Naive thymus-derived CD4-positive, alpha-beta T cell (primary cell): ENCODE measurements at regions of chr3 and their contacts with region 1.

Region 1: GRCh38 chr3:119676771-119677640 is at the start of gene COX17:
- DNase-seq: peak; percentile 87 to 98 (median 96)
- ATAC-seq: peak; percentile 91
- H3K4me3 ChIP-seq: peak within 1 kb of the TSS; percentile 62
- H3K4me3 Mint-ChIP-seq: peak within 1 kb of the TSS; percentile 78 to 98 (median 90)
- H3K27ac ChIP-seq: peak within 1 kb of the TSS; percentile 72
- H3K27ac Mint-ChIP-seq: peak within 1 kb of the TSS; percentile 94 to 99 (median 96)
- H3K4me1 ChIP-seq: peaks cover 14 to 16% of the 10 kb centered on the region in 2 donors
- H3K4me1 Mint-ChIP-seq: peaks cover 19 to 46% (median 41%) of the 10 kb centered on the region in 7 donors
- H3K27me3 ChIP-seq: no peaks in the 10 kb centered on the region
- H3K27me3 Mint-ChIP-seq: peaks cover 0 to 3% (median 0%) of the 10 kb centered on the region in 5 donors
- total RNA-seq, gene COX17: 25.6 to 55.0 (median 34.8) TPM

Region 2: DNA sequence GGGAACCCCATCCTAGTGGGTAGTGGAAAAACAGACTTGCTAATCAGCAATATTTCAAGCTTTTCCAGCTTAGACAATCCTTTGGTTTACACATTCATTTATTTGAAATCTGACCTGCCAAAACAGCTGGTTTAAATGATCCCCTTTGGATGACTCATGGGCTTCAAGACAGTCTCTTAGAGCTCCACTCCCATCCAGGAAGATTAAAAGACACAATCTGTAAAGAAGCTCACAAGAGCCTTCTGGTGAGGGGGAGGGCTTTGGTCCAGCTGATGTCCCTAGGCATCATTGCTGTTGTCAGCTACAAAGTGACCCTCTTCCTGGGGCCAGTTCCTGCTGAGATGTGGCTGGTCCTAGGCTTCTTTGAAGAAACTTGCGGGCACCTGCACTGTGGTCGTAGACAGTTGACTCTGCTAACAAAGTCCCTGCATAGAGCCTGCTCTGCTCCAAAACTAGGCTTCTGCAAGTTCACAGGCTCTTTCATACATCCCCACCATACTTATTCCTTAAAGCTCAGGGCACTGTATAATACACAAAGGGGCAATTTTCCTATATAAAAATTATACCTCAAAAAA is 716.0 kb before region 1 on chr3:
- CTCF ChIA-PET with region 1: no interaction called
- POLR2A ChIA-PET with region 1: no interaction called
- intact Hi-C with region 1: loop called in 1 of 2 experiments (anchors 10 kb)
- DNase-seq: no peak
- ATAC-seq: no peak
- H3K4me3 ChIP-seq: no peak overlapping the region
- H3K4me3 Mint-ChIP-seq: no peak overlapping the region
- H3K27ac ChIP-seq: no peak overlapping the region
- H3K27ac Mint-ChIP-seq: no peak overlapping the region
- H3K4me1 ChIP-seq: peaks cover 9 to 19% of the 10 kb centered on the region in 2 donors
- H3K4me1 Mint-ChIP-seq: peaks cover 13 to 34% (median 29%) of the 10 kb centered on the region in 7 donors
- H3K27me3 ChIP-seq: no peaks in the 10 kb centered on the region
- H3K27me3 Mint-ChIP-seq: peaks cover 0 to 25% (median 4%) of the 10 kb centered on the region in 5 donors

Region 3: GRCh38 chr3:119219069-119219468 is 457.9 kb before region 1 on chr3:
- CTCF ChIA-PET with region 1: no interaction called
- POLR2A ChIA-PET with region 1: interaction called, 3 read pairs
- intact Hi-C with region 1: loop called in 1 of 2 experiments (anchors 1 kb)
- DNase-seq: peak in 7 of 9 donors; percentile 65 to 87 (median 76)
- ATAC-seq: peak; percentile 96
- H3K4me3 ChIP-seq: peak overlapping the region; percentile 34
- H3K4me3 Mint-ChIP-seq: peak overlapping the region; percentile 54 to 87 (median 70)
- H3K27ac ChIP-seq: peak overlapping the region; percentile 68
- H3K27ac Mint-ChIP-seq: peak overlapping the region; percentile 90 to 99 (median 94)
- H3K4me1 ChIP-seq: peaks cover 9 to 25% of the 10 kb centered on the region in 2 donors
- H3K4me1 Mint-ChIP-seq: peaks cover 22 to 84% (median 71%) of the 10 kb centered on the region in 7 donors
- H3K27me3 ChIP-seq: no peaks in the 10 kb centered on the region
- H3K27me3 Mint-ChIP-seq: no peaks in the 10 kb centered on the region

Region 4: DNA sequence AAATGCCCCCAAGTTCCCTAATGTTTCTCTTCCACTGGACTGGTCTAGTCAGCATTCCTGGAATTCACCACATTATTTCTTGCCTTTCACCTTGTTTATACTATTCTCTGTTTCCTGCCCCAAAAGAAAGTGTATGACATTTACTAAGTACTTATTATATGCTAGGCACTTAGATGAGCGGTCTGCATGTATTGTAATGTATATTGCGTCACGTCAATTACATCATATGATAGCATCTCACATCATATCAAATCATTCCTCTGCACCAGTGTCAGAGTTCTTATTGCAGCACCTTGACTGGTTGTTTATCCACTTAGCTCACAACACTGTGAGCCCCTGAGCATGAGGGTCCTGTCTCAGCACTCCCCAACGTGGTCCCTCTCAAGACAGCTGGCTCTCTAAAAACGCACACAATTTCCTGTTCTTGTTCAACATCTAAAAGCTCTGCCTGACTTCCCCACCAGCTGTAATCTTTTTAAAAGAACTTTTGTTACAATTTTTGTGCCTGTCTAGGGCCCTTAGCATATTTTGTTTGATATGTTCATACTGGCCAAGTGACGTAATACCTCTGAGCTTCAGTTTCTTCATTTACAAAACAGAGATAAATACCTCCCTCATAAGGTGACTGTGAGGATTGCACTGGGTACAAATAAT is 324.0 kb before region 1 on chr3:
- CTCF ChIA-PET with region 1: no interaction called
- POLR2A ChIA-PET with region 1: no interaction called
- intact Hi-C with region 1: loop called in 1 of 2 experiments (anchors 1 kb)
- DNase-seq: peak in 7 of 9 donors; percentile 53 to 78 (median 69)
- ATAC-seq: peak; percentile 77
- H3K4me3 ChIP-seq: no peak overlapping the region
- H3K4me3 Mint-ChIP-seq: peak overlapping the region in 8 of 10 donors; percentile 2 to 67 (median 54)
- H3K27ac ChIP-seq: no peak overlapping the region
- H3K27ac Mint-ChIP-seq: peak overlapping the region in 8 of 9 donors; percentile 13 to 81 (median 42)
- H3K4me1 ChIP-seq: peaks cover 0 to 35% of the 10 kb centered on the region in 2 donors
- H3K4me1 Mint-ChIP-seq: peaks cover 26 to 47% (median 36%) of the 10 kb centered on the region in 7 donors
- H3K27me3 ChIP-seq: no peaks in the 10 kb centered on the region
- H3K27me3 Mint-ChIP-seq: peaks cover 0 to 20% (median 0%) of the 10 kb centered on the region in 5 donors

Region 5: GRCh38 chr3:119559441-119559963 is 117.5 kb before region 1 on chr3 and contains the start of gene CD80:
- CTCF ChIA-PET with region 1: no interaction called
- POLR2A ChIA-PET with region 1: no interaction called
- intact Hi-C with region 1: loop called in 1 of 2 experiments (anchors 1 kb)
- DNase-seq: peak in 7 of 9 donors; percentile 14 to 63 (median 33)
- ATAC-seq: peak; percentile 76
- H3K4me3 ChIP-seq: no peak within 1 kb of the TSS
- H3K4me3 Mint-ChIP-seq: peak within 1 kb of the TSS in 2 of 10 donors; percentile 12 to 81
- H3K27ac ChIP-seq: no peak within 1 kb of the TSS
- H3K27ac Mint-ChIP-seq: peak within 1 kb of the TSS in 2 of 9 donors; percentile 68 to 71
- H3K4me1 ChIP-seq: peaks cover 0 to 6% of the 10 kb centered on the region in 2 donors
- H3K4me1 Mint-ChIP-seq: peaks cover 0 to 64% (median 8%) of the 10 kb centered on the region in 7 donors
- H3K27me3 ChIP-seq: no peaks in the 10 kb centered on the region
- H3K27me3 Mint-ChIP-seq: peaks cover 0 to 5% (median 0%) of the 10 kb centered on the region in 5 donors
- total RNA-seq, gene CD80: 0.13 to 15.1 (median 1.2) TPM in 3 of 5 experiments, not detected in the others

Region 6: DNA sequence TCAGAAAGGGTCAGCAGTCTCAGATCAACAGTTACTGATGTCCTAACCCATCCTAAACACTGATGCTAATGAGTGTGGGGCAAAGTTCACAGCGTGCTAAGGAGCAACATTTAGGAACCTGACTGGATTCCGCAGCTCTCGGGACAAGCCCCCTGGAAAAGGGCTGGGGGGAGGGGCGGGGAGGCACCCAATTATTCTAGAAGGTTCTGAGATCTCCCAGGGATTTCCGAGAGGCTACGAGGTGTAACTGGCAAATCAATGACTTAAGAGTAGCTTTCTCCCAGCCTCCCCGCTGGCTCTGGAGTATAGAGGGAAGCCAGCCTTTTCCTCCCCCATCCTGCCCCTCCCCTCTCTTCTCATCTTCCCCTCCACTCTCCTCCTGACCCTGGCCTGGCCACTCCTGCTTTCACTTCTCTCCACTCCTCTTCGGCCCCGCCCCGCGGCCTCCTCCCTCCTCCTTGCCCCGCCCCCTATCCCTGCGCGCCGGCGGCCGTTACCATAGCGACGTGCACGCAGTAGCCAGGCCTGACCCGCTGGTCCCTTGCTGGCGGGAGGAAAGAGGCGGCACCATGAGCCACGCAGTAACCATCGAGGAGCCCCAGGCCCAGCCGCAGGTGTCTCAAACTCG is 25.6 kb after region 1 on chr3 and contains the start of gene CFAP91:
- CTCF ChIA-PET with region 1: no interaction called
- POLR2A ChIA-PET with region 1: interaction called, 3 read pairs
- intact Hi-C with region 1: loop called (anchors 1 kb)
- DNase-seq: peak; percentile 56 to 81 (median 63)
- ATAC-seq: peak; percentile 97
- H3K4me3 ChIP-seq: peak within 1 kb of the TSS; percentile 61
- H3K4me3 Mint-ChIP-seq: peak within 1 kb of the TSS; percentile 67 to 87 (median 82)
- H3K27ac ChIP-seq: peak within 1 kb of the TSS; percentile 16
- H3K27ac Mint-ChIP-seq: peak within 1 kb of the TSS in 6 of 9 donors; percentile 15 to 47 (median 43)
- H3K4me1 ChIP-seq: peaks cover 0 to 13% of the 10 kb centered on the region in 2 donors
- H3K4me1 Mint-ChIP-seq: peaks cover 16 to 36% (median 30%) of the 10 kb centered on the region in 7 donors
- H3K27me3 ChIP-seq: no peaks in the 10 kb centered on the region
- H3K27me3 Mint-ChIP-seq: peaks cover 0 to 33% (median 3%) of the 10 kb centered on the region in 5 donors
- total RNA-seq, gene CFAP91: 0.13 to 0.32 TPM in 2 of 5 experiments, not detected in the others

Region 7: DNA sequence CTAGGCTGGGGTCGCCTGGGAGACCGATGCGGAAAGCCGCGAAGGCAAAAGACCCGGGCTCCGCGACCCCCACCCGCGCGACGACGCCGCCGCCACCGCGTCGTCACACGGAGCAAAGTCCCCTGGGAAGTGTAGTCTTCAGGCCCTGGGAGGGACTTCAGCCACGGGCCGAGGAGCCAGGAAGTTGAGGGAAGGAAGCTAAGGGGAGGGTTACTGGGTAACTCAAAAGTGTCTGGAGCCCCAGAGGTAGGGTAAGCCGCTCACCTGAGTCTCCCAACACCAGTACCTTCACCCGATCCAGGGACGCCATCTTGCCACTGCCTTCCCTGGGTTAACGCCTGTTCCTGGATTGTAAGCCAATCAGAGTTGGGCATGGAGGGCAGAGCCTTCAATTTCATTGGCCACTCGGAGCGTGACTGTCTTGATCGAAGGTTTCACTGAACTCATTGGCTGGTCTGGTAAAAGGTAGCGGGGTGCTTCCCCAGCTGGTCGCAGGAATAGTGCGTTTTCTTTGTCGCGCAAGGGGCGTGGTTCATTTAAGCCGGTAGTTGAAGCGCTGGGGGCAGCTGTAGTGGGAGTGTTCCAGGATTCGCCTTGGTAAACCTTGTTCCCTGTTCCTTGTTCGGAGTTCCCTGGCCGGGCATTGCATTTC is 1065.3 kb after region 1 on chr3 and contains the starts of genes GTF2E1 and RABL3:
- CTCF ChIA-PET with region 1: no interaction called
- POLR2A ChIA-PET with region 1: no interaction called
- intact Hi-C with region 1: loop called in 1 of 2 experiments (anchors 1 kb)
- DNase-seq: peak; percentile 86 to 98 (median 97)
- ATAC-seq: peak; percentile 97
- H3K4me3 ChIP-seq: peak within 1 kb of the TSS; percentile 81
- H3K4me3 Mint-ChIP-seq: peak within 1 kb of the TSS; percentile 84 to 97 (median 92)
- H3K27ac ChIP-seq: peak within 1 kb of the TSS; percentile 98
- H3K27ac Mint-ChIP-seq: peak within 1 kb of the TSS; percentile 93 to 99 (median 97)
- H3K4me1 ChIP-seq: peaks cover 16 to 23% of the 10 kb centered on the region in 2 donors
- H3K4me1 Mint-ChIP-seq: peaks cover 26 to 55% (median 47%) of the 10 kb centered on the region in 7 donors
- H3K27me3 ChIP-seq: no peaks in the 10 kb centered on the region
- H3K27me3 Mint-ChIP-seq: no peaks in the 10 kb centered on the region
- total RNA-seq, gene GTF2E1: 8.4 to 27.3 (median 25.3) TPM
- total RNA-seq, gene RABL3: 15.4 to 30.3 (median 23.0) TPM